Activated naive CD4-positive, alpha-beta T cell treated with anti-CD3 and anti-CD28 coated beads for 36 hours (primary cell): ENCODE measurements at regions of chr22 and their contacts with region 1.

Region 1: GRCh38 chr22:39940757-39941305 is 19.4 kb upstream of the TMA7B start:
- DNase-seq: no peak
- H3K4me3 Mint-ChIP-seq: peak overlapping the region; percentile 33
- H3K27ac Mint-ChIP-seq: peak overlapping the region; percentile 95
- H3K4me1 Mint-ChIP-seq: peaks cover 93% of the 10 kb centered on the region
- H3K27me3 Mint-ChIP-seq: no peaks in the 10 kb centered on the region

Region 2: GRCh38 chr22:39567135-39567946 is 373.5 kb before region 1 on chr22:
- CTCF ChIA-PET with region 1: no interaction called
- intact Hi-C with region 1: loop called (anchors 2 kb)
- DNase-seq: peak; percentile 81
- H3K4me3 Mint-ChIP-seq: no peak overlapping the region
- H3K27ac Mint-ChIP-seq: peak overlapping the region; percentile 16
- H3K4me1 Mint-ChIP-seq: peaks cover 12% of the 10 kb centered on the region
- H3K27me3 Mint-ChIP-seq: no peaks in the 10 kb centered on the region

Region 3: GRCh38 chr22:39622881-39623367 is 317.9 kb before region 1 on chr22:
- CTCF ChIA-PET with region 1: interaction called, 3 read pairs
- intact Hi-C with region 1: loop called (anchors 2 kb)
- DNase-seq: peak; percentile 82
- H3K4me3 Mint-ChIP-seq: no peak overlapping the region
- H3K27ac Mint-ChIP-seq: no peak overlapping the region
- H3K4me1 Mint-ChIP-seq: peaks cover 4% of the 10 kb centered on the region
- H3K27me3 Mint-ChIP-seq: no peaks in the 10 kb centered on the region

Region 4: DNA sequence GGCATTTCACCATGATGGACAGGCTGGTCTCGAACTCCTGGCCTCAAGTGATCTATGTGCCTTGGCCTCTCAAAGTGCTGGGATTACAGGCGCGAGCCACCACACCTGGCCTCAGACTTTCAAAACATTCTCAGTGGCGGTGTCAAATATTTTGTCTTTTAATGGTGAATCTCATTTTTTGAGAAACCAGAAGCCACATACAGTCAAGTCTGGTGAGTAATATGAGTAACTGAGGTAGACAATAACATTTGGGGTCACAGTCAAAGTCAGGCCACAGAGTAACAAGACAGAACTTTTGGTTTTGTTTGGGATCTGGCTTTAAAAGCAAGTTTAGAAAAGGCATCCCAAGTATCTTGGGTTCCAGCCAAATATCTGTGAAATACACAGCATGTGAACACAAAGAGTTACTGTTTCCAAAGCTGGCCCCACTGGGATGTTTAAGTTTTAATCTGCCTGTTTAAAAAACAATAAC is 13.8 kb after region 1 on chr22:
- CTCF ChIA-PET with region 1: interaction called, 20 read pairs
- intact Hi-C with region 1: loop called (anchors 1 kb)
- DNase-seq: no peak
- H3K4me3 Mint-ChIP-seq: no peak overlapping the region
- H3K27ac Mint-ChIP-seq: peak overlapping the region; percentile 32
- H3K4me1 Mint-ChIP-seq: peaks cover 86% of the 10 kb centered on the region
- H3K27me3 Mint-ChIP-seq: no peaks in the 10 kb centered on the region